Kidney (tissue), 22 donors: ENCODE measurements at regions of chr11 and their contacts with region 1.

Region 1: DNA sequence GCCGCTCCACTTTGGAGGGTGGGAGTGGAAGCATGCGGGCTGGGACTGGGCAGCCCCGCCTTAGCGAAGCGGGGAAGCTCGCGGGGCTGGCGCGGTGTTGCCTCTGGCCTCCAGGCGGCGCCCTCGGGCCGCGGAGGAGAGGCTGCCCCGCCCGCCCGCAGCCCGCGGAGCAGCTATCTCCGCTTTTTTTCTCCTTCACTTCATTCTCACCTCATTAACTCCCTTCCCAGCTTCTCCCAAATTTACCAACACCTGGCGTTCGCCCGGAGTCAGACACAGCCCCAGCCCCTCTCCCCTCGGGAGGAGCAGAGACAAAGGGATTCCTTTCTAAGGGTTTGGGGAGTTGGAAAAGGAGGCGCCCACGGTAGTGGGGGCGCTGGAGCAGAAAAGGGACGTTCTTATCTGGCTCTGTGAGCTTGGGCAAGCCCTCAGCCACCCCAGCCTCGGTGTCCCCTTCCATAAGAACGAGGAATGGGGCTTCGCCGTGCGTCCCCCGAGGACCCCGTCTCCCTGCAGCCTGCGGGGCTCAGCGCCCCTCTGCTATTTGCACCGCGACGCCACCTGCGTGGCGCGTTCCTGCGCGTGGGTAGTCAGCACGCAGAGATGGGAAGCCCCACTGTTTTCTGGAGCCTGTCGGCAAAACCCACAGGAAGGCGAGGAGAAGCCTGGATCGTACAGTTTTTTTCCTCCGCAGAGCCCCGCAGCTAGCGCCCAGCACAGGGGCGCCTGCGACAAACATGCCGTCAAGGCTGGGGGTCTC is 1.5 kb upstream of the WNT11 start:
- DNase-seq: peak; percentile 79 to 92 (median 89)
- H3K4me3 ChIP-seq: peak overlapping the region; percentile 50 to 62 (median 55)
- H3K27ac ChIP-seq: no peak overlapping the region
- H3K4me1 ChIP-seq: peaks cover 0 to 20% (median 4%) of the 10 kb centered on the region in 3 donors
- H3K27me3 ChIP-seq: peaks cover 6% of the 10 kb centered on the region
- CTCF ChIP-seq: peak; percentile 91

Region 2: DNA sequence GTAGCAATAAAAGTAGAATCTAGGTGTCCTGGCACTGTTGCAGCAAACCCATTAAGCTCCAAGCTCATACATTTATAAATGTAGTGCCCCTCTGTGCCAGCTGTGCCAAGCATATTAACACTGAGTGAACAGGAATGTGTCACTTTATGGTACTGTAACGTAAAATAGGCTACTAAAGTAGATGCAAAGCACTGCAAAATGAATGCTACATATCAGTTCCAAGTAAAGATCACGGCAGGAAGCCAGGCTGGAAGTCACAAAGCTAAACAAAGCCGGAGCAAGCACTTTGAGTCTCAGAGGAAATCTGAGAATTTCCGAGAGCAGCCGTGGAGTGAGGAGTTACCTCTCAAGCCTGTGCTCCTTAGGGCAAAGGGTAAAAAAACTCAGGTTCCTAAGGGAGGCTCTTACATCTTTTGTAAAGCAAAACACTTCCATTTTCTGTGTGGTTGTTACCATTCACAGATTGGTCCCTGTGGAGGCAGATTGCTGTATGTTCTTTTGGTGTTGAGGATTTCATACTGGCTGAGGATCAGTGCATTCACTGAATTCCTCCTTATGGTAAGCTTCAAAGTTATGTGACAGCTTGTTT is 87.2 kb before region 1 on chr11:
- intact Hi-C with region 1: no loop called
- DNase-seq: peak in 3 of 5 donors; percentile 44 to 80 (median 76)
- H3K4me3 ChIP-seq: no peak overlapping the region
- H3K27ac ChIP-seq: no peak overlapping the region
- H3K4me1 ChIP-seq: peaks cover 4 to 11% (median 6%) of the 10 kb centered on the region in 3 donors
- H3K27me3 ChIP-seq: no peaks in the 10 kb centered on the region
- CTCF ChIP-seq: no peak

Region 3: GRCh38 chr11:76318744-76319384 is 111.0 kb after region 1 on chr11:
- intact Hi-C with region 1: loop called (anchors 10 kb)
- DNase-seq: peak; percentile 81 to 90 (median 87)
- H3K4me3 ChIP-seq: no peak overlapping the region
- H3K27ac ChIP-seq: no peak overlapping the region
- H3K4me1 ChIP-seq: no peaks in the 10 kb centered on the region
- H3K27me3 ChIP-seq: peaks cover 6% of the 10 kb centered on the region
- CTCF ChIP-seq: peak; percentile 93